Activated CD8-positive, alpha-beta T cell treated with anti-CD3 and anti-CD28 coated beads, Interleukin-2, amount 10 ng/mL, durations not matched to agents 7 days and 5 days (primary cell): ENCODE measurements at regions of chr15 and their contacts with region 1.

Region 1: DNA sequence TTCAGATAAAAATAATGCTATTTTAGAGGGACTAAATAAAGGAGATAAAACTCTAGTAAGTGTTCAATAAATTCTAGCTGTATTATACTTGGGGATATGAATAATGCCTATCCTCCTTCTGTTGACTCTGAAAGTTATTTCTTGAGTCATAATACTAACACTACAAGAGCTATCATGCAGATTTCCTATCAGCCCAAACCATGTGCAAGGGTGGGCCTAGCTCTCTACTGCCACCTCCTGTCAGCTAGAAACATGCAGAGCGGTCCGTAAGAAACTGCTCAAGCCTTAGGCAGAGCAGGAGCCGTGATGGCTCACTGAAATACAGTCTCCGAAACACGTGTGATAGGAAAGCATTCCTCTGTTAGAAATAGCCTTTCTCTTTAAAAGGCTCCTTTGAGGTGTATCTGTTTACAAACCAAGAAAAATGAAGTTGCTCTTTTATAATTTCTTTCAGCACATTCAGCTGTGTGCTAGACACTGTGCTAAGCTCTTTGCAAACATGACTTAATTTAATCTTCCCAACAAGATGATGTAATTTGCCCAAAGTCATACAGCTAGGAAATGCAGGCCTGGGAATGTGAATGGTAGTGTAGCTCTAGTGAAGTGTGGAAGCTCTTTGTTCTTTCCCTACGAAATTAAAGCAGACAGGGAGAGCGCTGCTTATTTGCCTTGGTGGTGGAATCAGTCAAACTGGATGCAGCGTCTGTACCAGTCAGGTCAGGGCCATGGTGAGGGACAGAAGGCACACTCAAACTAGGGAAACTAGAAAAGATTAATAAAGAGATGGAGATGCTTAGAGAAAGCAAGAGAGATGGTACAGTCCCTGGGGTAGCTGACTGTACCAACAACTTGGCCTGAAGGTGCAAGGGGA is 43.1 kb downstream of the MTHFS start:
- DNase-seq: peak; percentile 75
- ATAC-seq: peak; percentile 98
- H3K4me3 Mint-ChIP-seq: no peak overlapping the region
- H3K27ac Mint-ChIP-seq: no peak overlapping the region
- H3K4me1 Mint-ChIP-seq: peaks cover 9% of the 10 kb centered on the region
- H3K27me3 Mint-ChIP-seq: no peaks in the 10 kb centered on the region

Region 2: DNA sequence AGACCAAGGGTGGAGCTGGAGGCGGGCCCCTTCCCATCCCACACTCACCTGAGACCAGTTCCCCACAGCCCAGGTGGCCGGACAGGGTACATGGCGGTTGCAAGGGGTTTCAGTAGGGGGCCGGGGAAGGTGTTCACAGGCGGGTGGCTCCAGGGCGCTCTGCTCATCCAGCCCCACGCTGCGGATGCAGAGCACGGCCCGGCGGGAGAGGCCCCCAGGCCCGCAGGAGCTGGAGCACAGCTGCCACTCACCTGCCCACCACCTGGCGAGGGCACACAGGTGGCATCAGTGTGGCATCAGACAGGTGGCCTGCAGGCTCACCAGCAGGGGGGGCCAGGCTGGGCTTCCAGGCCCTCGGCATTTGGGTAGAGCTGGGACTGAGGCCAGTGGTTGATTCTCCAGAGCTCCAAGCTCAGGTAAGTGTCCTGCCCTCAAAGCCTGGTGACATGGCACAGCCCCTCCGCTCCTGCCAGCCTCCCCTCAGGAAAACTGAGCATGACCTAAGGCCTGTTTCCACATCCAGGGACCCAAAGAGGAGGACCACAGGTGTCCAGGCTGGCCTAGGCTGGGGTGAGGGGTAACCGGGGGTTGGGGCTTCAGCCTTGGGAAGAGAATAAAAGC is 1086.3 kb before region 1 on chr15:
- CTCF ChIA-PET with region 1: no interaction called
- POLR2A ChIA-PET with region 1: no interaction called
- DNase-seq: no peak
- ATAC-seq: no peak
- H3K4me3 Mint-ChIP-seq: no peak overlapping the region
- H3K27ac Mint-ChIP-seq: no peak overlapping the region
- H3K4me1 Mint-ChIP-seq: peaks cover 5% of the 10 kb centered on the region
- H3K27me3 Mint-ChIP-seq: no peaks in the 10 kb centered on the region

Region 3: GRCh38 chr15:79380755-79381497 is 472.8 kb before region 1 on chr15:
- CTCF ChIA-PET with region 1: interaction called, 59 read pairs
- POLR2A ChIA-PET with region 1: no interaction called
- DNase-seq: peak; percentile 82
- ATAC-seq: peak; percentile 88
- H3K4me3 Mint-ChIP-seq: no peak overlapping the region
- H3K27ac Mint-ChIP-seq: no peak overlapping the region
- H3K4me1 Mint-ChIP-seq: no peaks in the 10 kb centered on the region
- H3K27me3 Mint-ChIP-seq: no peaks in the 10 kb centered on the region

Region 4: DNA sequence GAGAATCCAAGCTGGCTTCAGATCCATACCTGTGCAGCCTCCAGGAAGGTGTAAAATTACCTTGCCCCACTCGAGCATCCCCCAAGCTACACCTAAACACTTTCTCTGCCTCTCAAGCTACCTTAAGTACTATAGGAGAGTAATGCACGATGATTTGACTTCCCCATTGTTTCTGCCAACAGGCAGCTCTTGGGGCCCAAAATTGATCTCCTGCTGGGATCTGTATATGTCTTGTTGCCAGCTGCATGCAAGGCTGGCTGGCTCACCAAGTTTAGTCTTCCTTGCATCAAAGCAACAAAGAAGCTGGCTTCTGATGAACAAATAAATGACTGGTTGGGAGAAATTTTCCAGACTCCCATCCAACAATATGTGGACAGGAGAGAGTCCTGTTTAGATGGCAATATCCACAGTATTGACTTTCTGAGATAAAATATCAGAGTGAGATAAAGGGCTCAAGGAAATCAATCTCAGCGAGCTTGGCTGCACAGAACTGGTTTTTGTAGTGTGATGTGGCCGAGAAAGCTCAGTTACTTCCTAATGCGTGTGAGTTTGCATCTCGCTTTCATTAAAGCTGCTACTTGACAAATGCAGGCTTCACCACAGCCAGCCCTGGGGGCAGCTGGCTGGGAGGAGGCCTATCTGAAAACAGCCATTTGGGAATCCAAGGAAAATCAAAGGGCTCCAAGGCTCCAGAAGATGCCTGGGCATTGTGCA is 280.8 kb before region 1 on chr15:
- CTCF ChIA-PET with region 1: no interaction called
- POLR2A ChIA-PET with region 1: no interaction called
- DNase-seq: no peak
- ATAC-seq: no peak
- H3K4me3 Mint-ChIP-seq: no peak overlapping the region
- H3K27ac Mint-ChIP-seq: no peak overlapping the region
- H3K4me1 Mint-ChIP-seq: no peaks in the 10 kb centered on the region
- H3K27me3 Mint-ChIP-seq: peaks cover 5% of the 10 kb centered on the region

Region 5: GRCh38 chr15:79811406-79812405 is 42.0 kb before region 1 on chr15:
- CTCF ChIA-PET with region 1: no interaction called
- POLR2A ChIA-PET with region 1: no interaction called
- DNase-seq: no peak
- ATAC-seq: no peak
- H3K4me3 Mint-ChIP-seq: no peak overlapping the region
- H3K27ac Mint-ChIP-seq: no peak overlapping the region
- H3K4me1 Mint-ChIP-seq: no peaks in the 10 kb centered on the region
- H3K27me3 Mint-ChIP-seq: no peaks in the 10 kb centered on the region

Region 6: GRCh38 chr15:79831604-79832003 is 22.1 kb before region 1 on chr15:
- CTCF ChIA-PET with region 1: interaction called, 10 read pairs
- POLR2A ChIA-PET with region 1: no interaction called
- DNase-seq: no peak
- ATAC-seq: no peak
- H3K4me3 Mint-ChIP-seq: no peak overlapping the region
- H3K27ac Mint-ChIP-seq: no peak overlapping the region
- H3K4me1 Mint-ChIP-seq: peaks cover 17% of the 10 kb centered on the region
- H3K27me3 Mint-ChIP-seq: no peaks in the 10 kb centered on the region

Region 7: GRCh38 chr15:79872358-79873017 is 18.8 kb after region 1 on chr15:
- CTCF ChIA-PET with region 1: interaction called, 35 read pairs
- POLR2A ChIA-PET with region 1: interaction called, 3 read pairs
- DNase-seq: peak; percentile 70
- ATAC-seq: peak; percentile 72
- H3K4me3 Mint-ChIP-seq: peak overlapping the region; percentile 4
- H3K27ac Mint-ChIP-seq: peak overlapping the region; percentile 54
- H3K4me1 Mint-ChIP-seq: peaks cover 19% of the 10 kb centered on the region
- H3K27me3 Mint-ChIP-seq: no peaks in the 10 kb centered on the region

Region 8: DNA sequence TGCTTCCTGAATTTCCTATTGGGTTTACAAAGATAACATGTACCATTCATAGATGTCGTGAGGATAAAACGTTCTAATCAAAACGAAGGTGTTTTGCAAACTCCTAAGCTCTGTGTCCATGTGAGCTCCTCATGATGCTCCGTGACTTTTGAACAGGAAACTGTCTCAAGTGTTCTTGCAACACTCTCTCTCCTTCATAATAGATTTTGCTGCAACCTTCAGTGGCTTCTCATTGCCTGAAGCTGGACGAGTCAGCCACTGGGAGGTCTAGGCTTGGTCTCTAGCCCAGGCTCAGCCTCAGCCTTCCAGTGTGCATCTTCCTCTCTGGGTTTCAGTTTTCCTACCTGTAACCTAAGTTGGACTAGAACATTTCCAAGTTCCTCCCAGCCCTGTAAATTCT is 136.0 kb after region 1 on chr15:
- CTCF ChIA-PET with region 1: interaction called, 45 read pairs
- POLR2A ChIA-PET with region 1: no interaction called
- DNase-seq: no peak
- ATAC-seq: no peak
- H3K4me3 Mint-ChIP-seq: no peak overlapping the region
- H3K27ac Mint-ChIP-seq: no peak overlapping the region
- H3K4me1 Mint-ChIP-seq: peaks cover 3% of the 10 kb centered on the region
- H3K27me3 Mint-ChIP-seq: peaks cover 9% of the 10 kb centered on the region